Endothelial cell of umbilical vein (primary cell): ENCODE measurements at regions of chr10 and their contacts with region 1.

Region 1: DNA sequence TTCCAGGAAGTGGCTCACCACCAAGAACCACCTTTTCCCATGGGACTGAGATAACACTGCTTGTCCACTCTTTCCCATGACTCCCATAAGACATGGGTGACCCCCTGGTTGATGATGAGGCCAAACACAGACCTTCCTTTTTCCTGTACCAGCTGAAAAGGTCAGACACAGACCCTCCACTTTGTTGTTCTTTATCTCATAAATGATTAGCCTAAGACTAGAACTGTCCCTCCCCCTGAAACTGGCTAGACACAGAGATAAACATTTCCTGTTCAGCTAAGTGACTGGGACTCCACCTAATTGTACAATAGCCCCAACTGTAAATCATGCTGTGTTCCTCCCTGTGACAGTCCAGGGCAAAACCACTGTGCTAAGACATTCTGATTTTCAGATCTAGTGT is 8.2 kb upstream of the NRG3 start:
- DNase-seq: peak; percentile 94
- H3K4me3 ChIP-seq: no peak overlapping the region
- H3K27ac ChIP-seq: peak overlapping the region; percentile 56
- H3K4me1 ChIP-seq: peaks cover 36% of the 10 kb centered on the region
- H3K27me3 ChIP-seq: no peaks in the 10 kb centered on the region
- CTCF ChIP-seq: no peak
- POLR2A ChIP-seq: no peak

Region 2: GRCh38 chr10:81730891-81731290 is 135.9 kb before region 1 on chr10:
- CTCF ChIA-PET with region 1: no interaction called
- POLR2A ChIA-PET with region 1: no interaction called
- dilution Hi-C with region 1: no loop called
- intact Hi-C with region 1: no loop called
- DNase-seq: no peak
- H3K4me3 ChIP-seq: no peak overlapping the region
- H3K27ac ChIP-seq: no peak overlapping the region
- H3K4me1 ChIP-seq: no peaks in the 10 kb centered on the region
- H3K27me3 ChIP-seq: no peaks in the 10 kb centered on the region
- CTCF ChIP-seq: no peak
- POLR2A ChIP-seq: no peak

Region 3: GRCh38 chr10:81963606-81964005 is 96.9 kb after region 1 on chr10:
- CTCF ChIA-PET with region 1: no interaction called
- POLR2A ChIA-PET with region 1: no interaction called
- dilution Hi-C with region 1: no loop called
- intact Hi-C with region 1: loop called (anchors 1 kb)
- DNase-seq: peak; percentile 83
- H3K4me3 ChIP-seq: no peak overlapping the region
- H3K27ac ChIP-seq: peak overlapping the region; percentile 57
- H3K4me1 ChIP-seq: peaks cover 41% of the 10 kb centered on the region
- H3K27me3 ChIP-seq: no peaks in the 10 kb centered on the region
- CTCF ChIP-seq: no peak
- POLR2A ChIP-seq: no peak